Ovary (tissue), 10 donors: ENCODE measurements at regions of chr6 and their contacts with region 1.

Region 1: GRCh38 chr6:3742426-3743344 is 8.8 kb downstream of the PXDC1 start:
- DNase-seq: peak; percentile 73 to 89 (median 87)
- H3K4me3 ChIP-seq: no peak overlapping the region
- H3K27ac ChIP-seq: peak overlapping the region in 1 of 2 donors; percentile 46
- H3K4me1 ChIP-seq: peaks cover 4% of the 10 kb centered on the region
- H3K27me3 ChIP-seq: no peaks in the 10 kb centered on the region
- CTCF ChIP-seq: peak; percentile 81 to 95 (median 92)
- EP300 ChIP-seq: no peak
- POLR2A ChIP-seq: no peak

Region 2: GRCh38 chr6:2959909-2960719 is 782.6 kb before region 1 on chr6:
- intact Hi-C with region 1: no loop called
- DNase-seq: no peak
- H3K4me3 ChIP-seq: no peak overlapping the region
- H3K27ac ChIP-seq: no peak overlapping the region
- H3K4me1 ChIP-seq: peaks cover 7% of the 10 kb centered on the region
- H3K27me3 ChIP-seq: no peaks in the 10 kb centered on the region
- CTCF ChIP-seq: no peak
- EP300 ChIP-seq: no peak
- POLR2A ChIP-seq: no peak

Region 3: DNA sequence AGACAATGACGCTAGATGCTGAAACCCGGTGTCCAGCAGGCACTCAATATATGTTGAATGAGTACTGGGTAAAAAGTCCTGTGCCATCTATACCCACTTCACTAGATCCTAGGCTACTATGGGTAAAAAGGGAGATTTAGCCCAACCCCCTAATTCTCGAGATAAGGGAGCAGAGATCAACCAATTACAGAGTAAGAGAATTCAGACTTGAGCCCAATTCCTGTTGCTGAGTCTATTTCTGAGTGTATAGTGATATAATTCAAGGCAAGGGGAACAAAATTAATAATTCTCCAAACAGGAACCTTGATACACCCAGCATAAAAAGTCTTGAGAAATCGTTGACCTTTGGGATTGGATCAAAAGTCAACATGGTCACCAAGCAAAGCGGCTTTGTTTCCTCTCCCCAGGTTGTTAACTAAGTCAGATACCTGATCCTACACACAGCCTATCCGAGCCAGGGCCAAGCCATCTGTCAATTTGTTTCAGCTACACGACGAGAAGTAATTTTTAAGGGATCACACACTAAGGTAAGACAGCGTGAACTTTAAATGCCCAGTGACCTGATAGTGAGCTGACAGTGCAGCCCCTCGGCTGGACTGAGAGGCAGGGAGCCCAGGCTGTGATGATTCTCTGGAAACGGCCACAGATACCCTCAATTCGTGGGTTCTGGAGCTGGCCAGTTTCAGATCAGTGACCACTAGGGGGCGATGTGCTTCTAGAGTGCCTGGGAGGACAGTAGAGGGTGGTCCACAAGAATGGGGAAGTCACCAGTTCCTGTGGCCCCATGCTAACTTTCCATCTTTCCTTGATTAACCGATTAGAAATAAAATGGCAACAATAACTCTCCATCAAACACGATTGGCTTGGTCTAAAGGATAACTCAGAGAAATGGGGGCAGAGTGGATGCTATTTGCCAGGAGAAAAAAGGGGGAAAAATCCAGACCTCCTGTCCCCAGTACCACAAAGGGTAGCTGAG is 332.0 kb before region 1 on chr6:
- intact Hi-C with region 1: no loop called
- DNase-seq: peak in 2 of 5 donors; percentile 42 to 47
- H3K4me3 ChIP-seq: no peak overlapping the region
- H3K27ac ChIP-seq: no peak overlapping the region
- H3K4me1 ChIP-seq: no peaks in the 10 kb centered on the region
- H3K27me3 ChIP-seq: no peaks in the 10 kb centered on the region
- CTCF ChIP-seq: no peak
- EP300 ChIP-seq: no peak
- POLR2A ChIP-seq: no peak

Region 4: DNA sequence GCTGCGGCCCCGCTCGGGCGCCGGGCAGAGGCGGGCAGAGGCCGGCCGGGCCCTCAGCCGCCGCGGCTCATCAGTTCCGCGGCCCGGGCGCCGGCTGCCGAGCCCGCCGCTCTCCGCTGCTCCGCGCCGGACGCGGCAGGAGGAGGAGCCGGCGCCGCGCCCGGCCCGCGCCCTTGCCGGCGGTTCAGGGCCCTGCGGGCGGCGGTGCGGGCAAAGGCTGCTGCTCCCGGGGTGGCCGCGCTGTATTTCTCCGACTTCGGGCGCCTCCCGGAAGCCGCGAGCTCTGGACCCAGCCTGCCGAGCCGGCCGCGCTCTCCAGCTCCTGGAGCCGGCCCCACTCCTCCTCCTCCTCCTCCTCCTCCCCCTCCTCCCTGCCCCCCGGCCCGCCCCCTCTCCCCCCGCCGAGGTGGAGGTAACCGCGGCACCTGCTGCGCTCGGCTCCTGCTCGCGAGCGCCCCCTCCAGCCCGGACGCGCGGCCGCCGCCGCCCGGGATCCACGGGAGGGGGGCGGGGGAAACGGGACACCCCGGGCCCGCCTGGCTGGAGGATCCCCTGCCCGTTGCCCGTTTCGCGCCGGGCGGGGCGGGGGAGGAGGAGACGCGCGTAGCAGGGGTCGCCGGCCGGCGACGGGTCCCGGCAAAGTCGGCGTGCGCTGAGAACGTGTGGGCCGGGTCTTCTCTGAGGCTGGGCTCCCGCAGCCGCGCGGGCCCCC is 285.8 kb before region 1 on chr6 and contains the start of gene SLC22A23:
- intact Hi-C with region 1: loop called in 1 of 4 experiments (anchors 5 kb)
- DNase-seq: peak; percentile 69 to 83 (median 77)
- H3K4me3 ChIP-seq: peak within 1 kb of the TSS; percentile 49
- H3K27ac ChIP-seq: peak within 1 kb of the TSS; percentile 41 to 56
- H3K4me1 ChIP-seq: peaks cover 8% of the 10 kb centered on the region
- H3K27me3 ChIP-seq: no peaks in the 10 kb centered on the region
- CTCF ChIP-seq: peak; percentile 30 to 66 (median 62)
- EP300 ChIP-seq: no peak
- POLR2A ChIP-seq: no peak
- total RNA-seq, gene SLC22A23: 3.7 to 31.0 (median 6.9) TPM

Region 5: DNA sequence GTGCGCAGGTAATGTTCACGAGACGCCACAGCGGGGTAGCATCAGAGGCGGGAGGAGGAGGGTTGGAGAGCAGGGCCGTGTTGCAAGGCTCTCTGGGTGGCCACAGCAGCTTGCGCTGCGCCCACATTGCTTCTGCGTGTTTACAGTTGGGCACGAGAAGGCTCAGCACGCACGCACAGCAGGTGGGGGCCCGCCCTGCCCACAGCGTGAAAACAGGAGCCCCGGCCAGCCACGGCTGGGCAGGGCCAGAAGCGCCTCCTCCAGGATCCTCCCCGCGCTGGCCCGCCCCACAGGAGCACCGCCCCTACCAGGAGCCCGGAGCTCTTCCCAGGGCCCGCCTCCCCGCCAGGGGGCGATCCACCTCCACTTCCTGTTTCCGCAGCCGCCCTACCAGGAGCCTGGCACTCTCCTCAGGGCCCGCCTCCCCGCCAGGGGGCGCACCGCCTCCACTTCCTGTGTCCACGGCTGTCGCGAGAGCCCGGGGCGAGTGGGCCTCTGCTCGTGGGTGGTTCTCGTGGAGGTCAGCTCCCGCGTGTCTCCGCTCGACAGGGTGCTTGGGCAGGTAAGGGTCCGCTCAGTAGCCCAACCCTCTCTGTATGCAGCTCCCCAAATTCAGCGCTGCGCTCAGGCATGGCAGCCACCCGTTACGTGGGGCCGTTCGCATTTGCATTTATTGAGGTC is 106.4 kb after region 1 on chr6 and contains the start of gene FAM50B:
- intact Hi-C with region 1: loop called in 2 of 4 experiments (anchors 10 kb)
- DNase-seq: peak; percentile 91 to 97 (median 95)
- H3K4me3 ChIP-seq: peak within 1 kb of the TSS; percentile 49
- H3K27ac ChIP-seq: peak within 1 kb of the TSS in 1 of 2 donors; percentile 12
- H3K4me1 ChIP-seq: peaks cover 6% of the 10 kb centered on the region
- H3K27me3 ChIP-seq: no peaks in the 10 kb centered on the region
- CTCF ChIP-seq: peak; percentile 77 to 98 (median 95)
- EP300 ChIP-seq: no peak
- POLR2A ChIP-seq: peak; percentile 27
- total RNA-seq, gene FAM50B: 11.5 to 23.0 (median 15.6) TPM

Region 6: DNA sequence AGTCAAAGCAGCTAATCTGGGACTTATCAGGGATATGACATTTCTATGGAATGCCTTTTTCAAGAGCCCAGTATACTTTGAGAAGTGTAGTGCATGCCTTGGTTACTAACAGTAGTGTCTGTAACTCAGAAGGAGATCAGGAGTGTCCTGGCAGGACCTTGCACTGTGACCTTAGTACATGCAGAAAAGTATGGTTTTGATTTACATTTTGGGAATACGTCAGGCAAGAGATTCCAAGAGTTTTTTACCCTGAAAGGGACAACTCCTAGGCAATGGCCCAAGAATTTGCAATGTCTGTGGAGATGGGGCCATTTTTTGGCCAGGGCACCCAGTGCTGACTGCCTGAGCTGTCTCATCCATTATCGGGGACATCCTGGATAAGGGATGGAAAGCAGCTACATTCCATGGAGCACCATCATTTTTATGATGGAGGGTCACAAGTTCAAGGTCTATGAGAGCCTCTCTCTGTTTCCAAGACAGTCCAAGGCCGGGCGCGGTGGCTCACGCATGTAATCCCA is 186.7 kb after region 1 on chr6:
- intact Hi-C with region 1: loop called in 1 of 4 experiments (anchors 5 kb)
- DNase-seq: peak in 4 of 5 donors; percentile 26 to 57 (median 42)
- H3K4me3 ChIP-seq: no peak overlapping the region
- H3K27ac ChIP-seq: no peak overlapping the region
- H3K4me1 ChIP-seq: peaks cover 2% of the 10 kb centered on the region
- H3K27me3 ChIP-seq: no peaks in the 10 kb centered on the region
- CTCF ChIP-seq: no peak
- EP300 ChIP-seq: no peak
- POLR2A ChIP-seq: no peak

Region 7: DNA sequence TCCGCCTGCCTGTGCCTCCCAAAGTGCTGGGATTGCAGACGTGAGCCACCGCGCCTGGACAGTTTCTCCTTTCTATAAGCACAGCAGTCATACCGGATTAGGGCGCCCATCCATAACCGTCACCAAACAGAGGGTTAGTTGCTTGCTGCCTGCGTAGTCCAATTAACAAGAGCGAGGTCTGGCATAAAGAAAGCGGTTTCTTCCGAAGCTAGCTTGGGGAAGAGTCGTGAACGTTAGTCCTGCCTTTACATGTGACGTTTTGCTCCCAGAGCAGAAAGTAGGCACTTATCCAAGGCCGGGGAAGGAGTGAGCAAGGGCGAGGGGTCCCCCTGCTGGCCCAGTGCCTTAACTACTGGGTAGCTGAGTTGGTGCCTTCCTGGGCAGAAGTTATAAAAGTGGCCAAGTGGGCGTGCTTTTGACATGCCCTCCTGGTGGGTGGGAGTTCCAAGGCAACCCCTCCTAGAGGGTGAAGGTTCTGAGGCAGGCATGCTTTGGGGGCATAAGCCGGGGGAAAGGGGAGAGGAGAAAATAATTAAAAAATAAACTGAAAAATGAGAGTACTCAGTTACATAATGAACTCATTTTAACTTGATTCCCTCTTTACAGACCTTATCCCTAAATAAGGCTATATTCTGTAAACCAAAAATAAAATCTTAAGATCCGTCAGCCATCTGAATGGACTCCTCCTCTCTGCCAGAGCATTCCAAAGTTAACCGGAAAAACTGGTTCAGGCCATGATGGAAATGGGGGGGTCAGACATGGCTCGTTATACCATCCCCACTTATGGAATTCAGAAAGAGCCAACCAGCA is 248.2 kb after region 1 on chr6:
- intact Hi-C with region 1: loop called (anchors 5 to 10 kb)
- DNase-seq: peak; percentile 84 to 89 (median 88)
- H3K4me3 ChIP-seq: peak overlapping the region; percentile 27
- H3K27ac ChIP-seq: peak overlapping the region in 1 of 2 donors; percentile 29
- H3K4me1 ChIP-seq: peaks cover 4% of the 10 kb centered on the region
- H3K27me3 ChIP-seq: no peaks in the 10 kb centered on the region
- CTCF ChIP-seq: peak; percentile 52 to 74 (median 69)
- EP300 ChIP-seq: no peak
- POLR2A ChIP-seq: no peak

Region 8: GRCh38 chr6:4155848-4156466 is 413.3 kb after region 1 on chr6:
- intact Hi-C with region 1: loop called in 3 of 4 experiments (anchors 10 kb)
- DNase-seq: peak; percentile 63 to 85 (median 71)
- H3K4me3 ChIP-seq: no peak overlapping the region
- H3K27ac ChIP-seq: no peak overlapping the region
- H3K4me1 ChIP-seq: no peaks in the 10 kb centered on the region
- H3K27me3 ChIP-seq: no peaks in the 10 kb centered on the region
- CTCF ChIP-seq: peak; percentile 59 to 70 (median 68)
- EP300 ChIP-seq: no peak
- POLR2A ChIP-seq: no peak